Activated CD4-positive, alpha-beta T cell treated with anti-CD3 and anti-CD28 coated beads for 36 hours (primary cell): ENCODE measurements at regions of chr14 and their contacts with region 1.

Region 1: DNA sequence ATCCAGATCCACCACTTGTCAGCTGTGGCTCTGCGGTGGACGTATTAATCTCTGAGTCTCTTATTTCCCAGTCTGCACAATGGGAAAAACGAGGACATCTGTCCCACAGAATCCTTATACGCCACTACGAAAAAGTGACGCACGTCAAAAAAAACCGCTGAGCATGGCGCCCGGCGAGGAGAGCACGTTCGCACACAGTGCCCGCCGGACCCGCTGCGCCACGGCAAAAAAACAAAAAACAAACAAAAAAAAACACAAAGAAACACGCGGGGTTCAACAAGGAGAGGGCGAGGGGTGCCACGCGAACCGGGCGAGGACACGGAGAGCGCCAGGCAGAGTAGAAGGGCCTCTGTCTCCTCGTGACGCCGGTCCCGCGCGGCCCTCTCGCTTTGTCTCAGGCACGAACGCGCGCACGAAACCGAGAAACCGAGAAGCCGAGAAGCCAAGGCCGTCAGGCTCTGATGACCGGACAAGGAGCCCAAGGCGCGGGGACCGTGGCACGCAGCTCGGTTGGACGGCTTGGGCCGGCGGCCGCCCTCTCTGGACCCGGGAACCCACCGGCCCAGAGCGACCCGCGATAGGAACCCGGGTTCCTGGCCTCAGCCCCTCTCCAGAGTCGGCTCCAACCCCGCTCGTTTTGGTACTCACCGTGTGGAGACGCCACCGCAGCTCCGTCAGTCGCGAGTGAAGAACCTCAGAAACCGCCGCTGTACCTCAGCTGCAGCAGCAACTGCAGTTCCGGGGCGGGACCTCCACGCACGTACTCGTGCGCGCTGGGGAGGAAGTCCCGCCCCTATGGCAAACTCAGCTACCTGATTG is at the start of gene DDX24:
- DNase-seq: peak; percentile 98
- ATAC-seq: peak; percentile 97
- H3K4me3 Mint-ChIP-seq: peak within 1 kb of the TSS; percentile 99
- H3K27ac Mint-ChIP-seq: peak within 1 kb of the TSS; percentile 100
- H3K4me1 Mint-ChIP-seq: peaks cover 48% of the 10 kb centered on the region
- H3K27me3 Mint-ChIP-seq: no peaks in the 10 kb centered on the region
- total RNA-seq, gene DDX24: 259 to 390 TPM

Region 2: GRCh38 chr14:93939304-93940229 is 141.1 kb before region 1 on chr14:
- CTCF ChIA-PET with region 1: interaction called, 14 read pairs
- POLR2A ChIA-PET with region 1: interaction called, 3 read pairs
- intact Hi-C with region 1: no loop called
- DNase-seq: peak; percentile 94
- ATAC-seq: peak; percentile 95
- H3K4me3 Mint-ChIP-seq: peak overlapping the region; percentile 43
- H3K27ac Mint-ChIP-seq: peak overlapping the region; percentile 38
- H3K4me1 Mint-ChIP-seq: peaks cover 14% of the 10 kb centered on the region
- H3K27me3 Mint-ChIP-seq: peaks cover 14% of the 10 kb centered on the region

Region 3: DNA sequence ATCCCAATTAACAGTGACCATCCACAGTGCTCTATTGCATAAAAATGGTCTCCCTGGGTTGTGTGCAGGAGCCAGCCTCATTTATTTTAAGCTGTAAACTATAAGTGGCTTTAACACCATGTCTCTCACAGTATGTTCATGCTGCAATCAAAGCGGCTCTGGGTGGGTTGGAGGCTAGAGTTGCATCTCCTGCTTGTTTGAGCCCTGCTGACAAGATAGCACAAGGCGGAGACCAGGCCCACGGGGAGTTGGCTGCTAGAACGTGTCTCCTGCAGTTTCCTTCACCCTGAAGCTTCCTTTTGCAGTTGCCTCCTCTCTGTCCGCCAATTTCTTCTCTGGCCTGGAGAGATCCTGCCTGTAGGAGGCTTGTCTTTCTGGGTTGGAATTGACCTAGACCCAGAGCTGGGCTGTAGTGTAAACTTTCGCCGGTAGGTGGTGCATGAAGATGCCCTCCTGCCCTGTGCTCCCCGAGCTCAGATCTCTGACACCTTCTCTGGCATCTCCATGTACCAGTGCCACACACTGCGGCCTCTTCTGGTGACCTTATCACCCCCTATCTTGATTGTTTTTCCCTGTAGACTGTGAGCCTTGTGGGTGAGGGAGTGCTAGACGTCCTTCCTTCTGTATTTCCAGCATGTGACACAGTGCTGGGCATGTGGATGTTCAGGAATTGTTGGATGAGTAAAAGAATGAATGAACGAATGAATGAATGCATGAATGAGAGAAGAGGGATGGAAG is 44.2 kb before region 1 on chr14:
- CTCF ChIA-PET with region 1: interaction called, 10 read pairs
- POLR2A ChIA-PET with region 1: no interaction called
- intact Hi-C with region 1: no loop called
- DNase-seq: peak; percentile 89
- ATAC-seq: peak; percentile 100
- H3K4me3 Mint-ChIP-seq: no peak overlapping the region
- H3K27ac Mint-ChIP-seq: no peak overlapping the region
- H3K4me1 Mint-ChIP-seq: peaks cover 3% of the 10 kb centered on the region
- H3K27me3 Mint-ChIP-seq: no peaks in the 10 kb centered on the region

Region 4: GRCh38 chr14:94115058-94115591 is 34.4 kb after region 1 on chr14:
- CTCF ChIA-PET with region 1: no interaction called
- POLR2A ChIA-PET with region 1: no interaction called
- intact Hi-C with region 1: no loop called
- DNase-seq: no peak
- ATAC-seq: no peak
- H3K4me3 Mint-ChIP-seq: no peak overlapping the region
- H3K27ac Mint-ChIP-seq: no peak overlapping the region
- H3K4me1 Mint-ChIP-seq: no peaks in the 10 kb centered on the region
- H3K27me3 Mint-ChIP-seq: peaks cover 8% of the 10 kb centered on the region

Region 5: GRCh38 chr14:94136575-94137331 is 56.1 kb after region 1 on chr14:
- CTCF ChIA-PET with region 1: interaction called, 24 read pairs
- POLR2A ChIA-PET with region 1: interaction called, 3 read pairs
- intact Hi-C with region 1: no loop called
- DNase-seq: peak; percentile 93
- ATAC-seq: peak; percentile 90
- H3K4me3 Mint-ChIP-seq: no peak overlapping the region
- H3K27ac Mint-ChIP-seq: no peak overlapping the region
- H3K4me1 Mint-ChIP-seq: peaks cover 5% of the 10 kb centered on the region
- H3K27me3 Mint-ChIP-seq: peaks cover 6% of the 10 kb centered on the region

Region 6: GRCh38 chr14:94392510-94392935 is 311.8 kb after region 1 on chr14:
- CTCF ChIA-PET with region 1: no interaction called
- POLR2A ChIA-PET with region 1: no interaction called
- intact Hi-C with region 1: loop called in 1 of 2 experiments (anchors 1 kb)
- DNase-seq: peak; percentile 84
- ATAC-seq: peak; percentile 67
- H3K4me3 Mint-ChIP-seq: no peak overlapping the region
- H3K27ac Mint-ChIP-seq: peak overlapping the region; percentile 97
- H3K4me1 Mint-ChIP-seq: peaks cover 70% of the 10 kb centered on the region
- H3K27me3 Mint-ChIP-seq: peaks cover 5% of the 10 kb centered on the region

Region 7: DNA sequence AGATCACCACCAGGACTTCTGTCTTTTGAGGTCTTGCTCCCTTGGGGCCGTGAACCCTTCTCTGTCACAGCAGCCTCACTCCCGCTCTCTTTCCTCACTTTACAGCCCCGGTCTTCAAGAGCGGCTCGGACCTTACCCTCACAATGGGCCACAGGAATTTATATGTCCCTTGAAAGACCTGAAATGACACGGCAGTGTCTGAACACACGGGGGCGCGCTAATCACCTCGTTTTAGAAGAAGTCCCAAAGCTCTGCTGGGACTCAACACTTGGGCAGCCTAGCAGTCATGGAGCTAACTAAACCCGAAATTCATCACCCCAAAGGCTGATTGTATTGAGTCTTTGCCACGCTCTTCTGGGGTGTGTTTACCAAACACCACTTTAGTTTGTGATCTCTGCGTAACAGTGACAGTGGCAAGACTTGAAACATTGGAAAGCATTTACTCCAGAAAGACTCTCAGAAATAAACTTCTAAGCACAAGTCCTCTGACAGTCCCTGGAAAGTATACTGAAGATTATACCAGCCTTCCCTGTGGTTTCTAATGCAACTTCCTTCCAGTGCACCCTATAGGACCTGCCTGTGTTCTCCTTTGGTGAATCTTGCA is 342.9 kb after region 1 on chr14:
- CTCF ChIA-PET with region 1: no interaction called
- POLR2A ChIA-PET with region 1: no interaction called
- intact Hi-C with region 1: no loop called
- DNase-seq: peak; percentile 84
- ATAC-seq: peak; percentile 74
- H3K4me3 Mint-ChIP-seq: peak overlapping the region; percentile 6
- H3K27ac Mint-ChIP-seq: peak overlapping the region; percentile 73
- H3K4me1 Mint-ChIP-seq: peaks cover 13% of the 10 kb centered on the region
- H3K27me3 Mint-ChIP-seq: peaks cover 7% of the 10 kb centered on the region

Region 8: GRCh38 chr14:94461526-94462218 is 381.0 kb after region 1 on chr14:
- CTCF ChIA-PET with region 1: no interaction called
- POLR2A ChIA-PET with region 1: no interaction called
- intact Hi-C with region 1: no loop called
- DNase-seq: no peak
- ATAC-seq: no peak
- H3K4me3 Mint-ChIP-seq: no peak overlapping the region
- H3K27ac Mint-ChIP-seq: no peak overlapping the region
- H3K4me1 Mint-ChIP-seq: peaks cover 10% of the 10 kb centered on the region
- H3K27me3 Mint-ChIP-seq: peaks cover 6% of the 10 kb centered on the region